Activated naive CD4-positive, alpha-beta T cell treated with anti-CD3 and anti-CD28 coated beads for 36 hours (primary cell): ENCODE measurements at regions of chr10 and their contacts with region 1.

Region 1: GRCh38 chr10:60536529-60537114 is 146.9 kb upstream of the ANK3 start:
- DNase-seq: peak; percentile 38
- H3K4me3 Mint-ChIP-seq: no peak overlapping the region
- H3K27ac Mint-ChIP-seq: no peak overlapping the region
- H3K4me1 Mint-ChIP-seq: peaks cover 34% of the 10 kb centered on the region
- H3K27me3 Mint-ChIP-seq: no peaks in the 10 kb centered on the region

Region 2: DNA sequence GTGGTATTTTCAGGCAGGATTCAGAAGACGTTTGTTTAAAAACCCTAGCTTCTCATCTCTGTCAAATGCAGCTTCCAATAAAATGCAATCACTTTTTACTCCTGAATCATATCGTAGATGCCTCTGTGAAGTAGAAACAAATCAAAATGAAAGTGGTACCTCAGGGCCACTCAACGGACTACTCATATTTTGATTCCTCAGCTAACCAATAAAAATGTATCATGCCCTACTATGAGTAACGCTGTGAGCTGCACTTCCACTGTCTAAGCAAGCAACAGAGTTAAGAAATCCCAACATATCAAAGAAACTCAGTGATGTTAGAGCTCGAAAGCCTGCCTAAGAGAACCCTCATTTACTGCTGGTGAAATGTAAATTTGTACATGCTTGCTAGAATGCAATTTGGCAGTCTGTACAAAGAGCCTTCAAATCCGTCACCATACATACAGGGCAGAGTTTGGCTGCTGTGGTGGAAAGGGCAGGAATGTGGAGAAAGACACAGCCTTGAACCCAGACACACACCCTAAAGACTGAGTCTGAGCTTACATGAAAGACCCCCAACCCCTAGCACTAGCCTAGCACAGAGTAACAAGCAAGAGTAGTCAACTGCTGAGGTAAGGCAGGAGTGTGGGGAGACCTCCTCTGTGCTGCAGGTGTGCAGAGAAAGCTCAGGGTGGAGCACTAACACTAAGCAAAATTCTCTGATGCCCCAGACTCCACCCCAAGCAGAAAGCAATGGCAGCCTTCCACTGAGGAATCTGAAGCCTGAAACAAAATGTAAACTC is 298.5 kb before region 1 on chr10:
- CTCF ChIA-PET with region 1: no interaction called
- intact Hi-C with region 1: loop called (anchors 5 kb)
- DNase-seq: peak; percentile 34
- H3K4me3 Mint-ChIP-seq: no peak overlapping the region
- H3K27ac Mint-ChIP-seq: peak overlapping the region; percentile 11
- H3K4me1 Mint-ChIP-seq: peaks cover 17% of the 10 kb centered on the region
- H3K27me3 Mint-ChIP-seq: no peaks in the 10 kb centered on the region

Region 3: GRCh38 chr10:60444494-60445064 is 92.0 kb before region 1 on chr10:
- CTCF ChIA-PET with region 1: no interaction called
- intact Hi-C with region 1: loop called (anchors 5 kb)
- DNase-seq: no peak
- H3K4me3 Mint-ChIP-seq: no peak overlapping the region
- H3K27ac Mint-ChIP-seq: no peak overlapping the region
- H3K4me1 Mint-ChIP-seq: peaks cover 12% of the 10 kb centered on the region
- H3K27me3 Mint-ChIP-seq: no peaks in the 10 kb centered on the region

Region 4: GRCh38 chr10:60521974-60522405 is 14.6 kb before region 1 on chr10:
- CTCF ChIA-PET with region 1: no interaction called
- intact Hi-C with region 1: no loop called
- DNase-seq: peak; percentile 14
- H3K4me3 Mint-ChIP-seq: no peak overlapping the region
- H3K27ac Mint-ChIP-seq: no peak overlapping the region
- H3K4me1 Mint-ChIP-seq: peaks cover 6% of the 10 kb centered on the region
- H3K27me3 Mint-ChIP-seq: no peaks in the 10 kb centered on the region

Region 5: GRCh38 chr10:60611291-60611747 is 74.7 kb after region 1 on chr10:
- CTCF ChIA-PET with region 1: interaction called, 3 read pairs
- intact Hi-C with region 1: loop called (anchors 1 kb)
- DNase-seq: peak; percentile 17
- H3K4me3 Mint-ChIP-seq: no peak overlapping the region
- H3K27ac Mint-ChIP-seq: peak overlapping the region; percentile 34
- H3K4me1 Mint-ChIP-seq: peaks cover 21% of the 10 kb centered on the region
- H3K27me3 Mint-ChIP-seq: no peaks in the 10 kb centered on the region